OCI-LY7 (cell line): ENCODE measurements at regions of chr3 and their contacts with region 1.

Region 1: DNA sequence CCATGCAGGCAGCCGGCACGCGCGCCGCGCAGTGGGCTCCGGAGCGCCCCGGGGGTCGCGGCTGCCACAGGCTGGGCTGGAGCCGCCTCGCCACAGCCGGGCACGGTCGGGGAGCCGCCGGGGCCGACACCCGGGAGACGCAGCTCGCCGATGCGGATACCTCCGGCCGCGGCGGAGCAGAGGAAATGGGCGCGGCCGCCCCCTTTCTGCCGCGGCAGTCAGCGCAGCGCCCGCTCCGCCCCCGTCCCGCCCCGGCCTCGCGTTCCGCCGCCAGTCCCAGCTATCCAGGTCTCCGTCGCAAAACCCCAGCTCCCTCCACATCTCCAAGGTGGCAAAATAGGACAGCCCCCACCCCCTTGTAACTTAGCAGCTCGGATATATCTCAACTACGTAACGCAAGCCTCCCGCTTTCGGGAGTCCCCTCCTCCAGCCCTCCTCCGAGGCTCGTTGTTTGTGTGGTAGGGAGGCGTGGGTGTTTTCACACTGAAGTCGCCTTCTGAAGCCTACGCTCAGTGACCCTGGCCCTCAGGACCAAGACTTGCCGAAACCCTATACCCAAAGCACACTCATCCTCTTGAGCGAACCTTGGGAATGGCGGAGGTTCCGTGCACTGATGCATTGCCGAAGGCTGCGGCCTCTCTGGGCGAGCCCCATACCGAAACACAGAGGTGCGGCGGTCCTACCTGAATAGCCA is at the start of gene SH3BP5:
- DNase-seq: peak; percentile 86
- H3K4me3 ChIP-seq: peak within 1 kb of the TSS; percentile 88
- H3K27ac ChIP-seq: peak within 1 kb of the TSS; percentile 24
- H3K4me1 ChIP-seq: peaks cover 50% of the 10 kb centered on the region
- CTCF ChIP-seq: peak; percentile 73
- total RNA-seq, gene SH3BP5: 15.1 and 15.7 TPM in 2 replicates

Region 2: DNA sequence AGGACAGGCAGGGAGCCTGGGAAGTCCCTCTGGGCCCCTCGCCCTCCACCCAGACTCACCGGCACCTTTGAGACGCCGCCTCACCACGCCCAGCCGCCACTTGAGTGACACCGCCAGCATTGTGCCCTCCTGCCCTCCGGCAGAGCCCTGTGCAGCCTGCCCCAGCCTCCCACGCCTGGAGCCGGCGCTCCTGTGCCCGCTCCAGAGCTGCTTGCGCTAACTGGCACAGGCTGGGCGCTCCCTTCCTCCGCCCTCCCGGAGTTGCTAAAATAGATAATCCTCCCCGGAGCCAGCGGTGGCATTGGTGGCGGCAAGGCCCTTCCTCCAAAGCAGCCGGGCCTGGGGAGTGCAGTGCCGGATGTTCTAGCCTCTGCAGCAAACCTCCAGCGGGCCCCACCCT is 776.7 kb before region 1 on chr3:
- CTCF ChIA-PET with region 1: no interaction called
- POLR2A ChIA-PET with region 1: no interaction called
- intact Hi-C with region 1: no loop called
- DNase-seq: no peak
- H3K4me3 ChIP-seq: no peak overlapping the region
- H3K27ac ChIP-seq: no peak overlapping the region
- H3K4me1 ChIP-seq: no peaks in the 10 kb centered on the region
- CTCF ChIP-seq: no peak

Region 3: GRCh38 chr3:15171096-15171495 is 161.5 kb before region 1 on chr3:
- CTCF ChIA-PET with region 1: no interaction called
- POLR2A ChIA-PET with region 1: no interaction called
- intact Hi-C with region 1: no loop called
- DNase-seq: no peak
- H3K4me3 ChIP-seq: no peak overlapping the region
- H3K27ac ChIP-seq: no peak overlapping the region
- H3K4me1 ChIP-seq: no peaks in the 10 kb centered on the region
- CTCF ChIP-seq: no peak

Region 4: GRCh38 chr3:15268033-15268631 is 64.4 kb before region 1 on chr3:
- CTCF ChIA-PET with region 1: interaction called, 10 read pairs
- POLR2A ChIA-PET with region 1: interaction called, 5 read pairs
- intact Hi-C with region 1: loop called (anchors 1 kb)
- DNase-seq: peak; percentile 90
- H3K4me3 ChIP-seq: no peak overlapping the region
- H3K27ac ChIP-seq: no peak overlapping the region
- H3K4me1 ChIP-seq: peaks cover 18% of the 10 kb centered on the region
- CTCF ChIP-seq: peak; percentile 99

Region 5: GRCh38 chr3:15319575-15319974 is 13.0 kb before region 1 on chr3:
- CTCF ChIA-PET with region 1: no interaction called
- POLR2A ChIA-PET with region 1: interaction called, 21 read pairs
- intact Hi-C with region 1: no loop called
- DNase-seq: no peak
- H3K4me3 ChIP-seq: no peak overlapping the region
- H3K27ac ChIP-seq: no peak overlapping the region
- H3K4me1 ChIP-seq: peaks cover 23% of the 10 kb centered on the region
- CTCF ChIP-seq: no peak

Region 6: DNA sequence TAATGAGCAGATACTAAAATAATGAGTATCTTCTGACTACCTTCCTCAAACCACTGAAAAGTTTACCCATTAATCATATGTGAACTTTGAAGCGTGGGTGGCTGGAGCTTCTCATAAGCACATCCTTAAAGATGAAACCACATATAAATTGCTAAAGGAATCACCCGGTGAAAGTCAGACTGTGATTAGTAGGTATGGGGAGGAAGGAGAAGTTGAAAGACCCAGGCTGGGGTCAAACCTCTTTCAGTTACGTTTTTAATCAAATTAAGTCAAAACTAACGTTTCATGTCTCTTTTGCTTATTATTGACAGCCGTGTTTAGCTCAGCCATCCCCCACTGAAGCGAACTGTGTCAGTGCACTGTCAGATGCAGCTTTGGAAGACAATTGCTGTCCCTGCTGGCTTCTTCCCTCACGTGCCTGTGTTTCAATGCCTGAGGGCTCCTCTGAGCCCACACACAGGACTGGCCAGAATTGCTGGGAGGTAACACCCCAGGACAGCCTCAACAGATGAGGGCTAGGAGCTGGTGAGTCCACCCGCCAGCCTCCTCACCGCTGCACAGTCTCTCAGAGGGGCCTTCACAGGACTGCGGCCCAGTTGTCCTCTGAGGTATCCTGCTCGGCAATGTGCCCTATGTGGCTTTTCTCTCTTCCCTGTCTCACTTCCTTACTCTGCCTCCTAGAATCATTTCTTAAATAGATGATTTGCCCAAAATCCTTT is 29.1 kb after region 1 on chr3:
- CTCF ChIA-PET with region 1: no interaction called
- POLR2A ChIA-PET with region 1: interaction called, 7 read pairs
- intact Hi-C with region 1: loop called (anchors 1 kb)
- DNase-seq: peak; percentile 67
- H3K4me3 ChIP-seq: peak overlapping the region; percentile 53
- H3K27ac ChIP-seq: peak overlapping the region; percentile 84
- H3K4me1 ChIP-seq: peaks cover 47% of the 10 kb centered on the region
- CTCF ChIP-seq: no peak

Region 7: DNA sequence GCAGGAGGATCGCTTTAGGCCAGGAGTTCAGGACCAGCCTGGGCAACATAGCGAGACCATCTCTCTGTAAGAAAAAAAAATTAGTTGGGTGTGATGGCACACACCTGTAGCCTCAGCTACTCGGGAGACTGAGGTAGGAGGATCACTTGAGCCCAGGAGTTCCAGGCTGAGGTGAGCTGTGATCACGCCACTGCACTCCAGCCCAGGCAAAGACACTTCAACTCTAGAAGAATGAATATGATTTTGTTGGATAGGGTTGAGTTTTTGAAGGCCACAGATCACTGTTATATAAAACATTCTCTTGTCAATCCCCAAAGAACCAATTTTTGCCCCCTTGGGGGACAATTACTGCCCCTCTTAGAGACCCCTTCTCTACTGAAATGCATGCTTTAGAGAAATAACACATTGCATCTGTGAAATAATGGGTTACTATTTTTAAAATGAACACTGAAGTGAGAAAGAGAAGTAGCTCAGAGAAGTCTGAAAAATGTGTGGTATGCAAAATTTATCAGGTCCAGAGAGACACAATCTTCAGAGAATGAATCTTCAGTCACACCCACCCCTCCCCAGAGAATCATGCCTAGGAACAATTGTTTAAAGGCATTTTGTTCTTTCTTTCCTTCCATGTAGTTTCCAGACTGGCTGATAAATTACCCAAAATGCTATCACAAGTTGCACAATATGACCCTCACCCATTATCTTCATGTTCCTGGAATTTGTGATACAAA is 52.1 kb after region 1 on chr3:
- CTCF ChIA-PET with region 1: interaction called, 5 read pairs
- POLR2A ChIA-PET with region 1: interaction called, 10 read pairs
- intact Hi-C with region 1: no loop called
- DNase-seq: peak; percentile 89
- H3K4me3 ChIP-seq: peak overlapping the region; percentile 45
- H3K27ac ChIP-seq: peak overlapping the region; percentile 96
- H3K4me1 ChIP-seq: peaks cover 90% of the 10 kb centered on the region
- CTCF ChIP-seq: no peak

Region 8: GRCh38 chr3:15440891-15441290 is 108.3 kb after region 1 on chr3:
- CTCF ChIA-PET with region 1: no interaction called
- POLR2A ChIA-PET with region 1: no interaction called
- intact Hi-C with region 1: no loop called
- DNase-seq: no peak
- H3K4me3 ChIP-seq: no peak overlapping the region
- H3K27ac ChIP-seq: no peak overlapping the region
- H3K4me1 ChIP-seq: no peaks in the 10 kb centered on the region
- CTCF ChIP-seq: no peak